ENCODE measurements at regions of chr12 and their contacts with region 1.

Region 1: GRCh38 chr12:26264215-26264838 is 69.0 kb downstream of the SSPN start:
- DNase-seq: peak; percentile 31
- H3K4me3 Mint-ChIP-seq: no peak overlapping the region
- H3K27ac Mint-ChIP-seq: no peak overlapping the region
- H3K4me1 Mint-ChIP-seq: no peaks in the 10 kb centered on the region
- H3K27me3 Mint-ChIP-seq: no peaks in the 10 kb centered on the region
- CTCF ChIP-seq: no peak

Region 2: DNA sequence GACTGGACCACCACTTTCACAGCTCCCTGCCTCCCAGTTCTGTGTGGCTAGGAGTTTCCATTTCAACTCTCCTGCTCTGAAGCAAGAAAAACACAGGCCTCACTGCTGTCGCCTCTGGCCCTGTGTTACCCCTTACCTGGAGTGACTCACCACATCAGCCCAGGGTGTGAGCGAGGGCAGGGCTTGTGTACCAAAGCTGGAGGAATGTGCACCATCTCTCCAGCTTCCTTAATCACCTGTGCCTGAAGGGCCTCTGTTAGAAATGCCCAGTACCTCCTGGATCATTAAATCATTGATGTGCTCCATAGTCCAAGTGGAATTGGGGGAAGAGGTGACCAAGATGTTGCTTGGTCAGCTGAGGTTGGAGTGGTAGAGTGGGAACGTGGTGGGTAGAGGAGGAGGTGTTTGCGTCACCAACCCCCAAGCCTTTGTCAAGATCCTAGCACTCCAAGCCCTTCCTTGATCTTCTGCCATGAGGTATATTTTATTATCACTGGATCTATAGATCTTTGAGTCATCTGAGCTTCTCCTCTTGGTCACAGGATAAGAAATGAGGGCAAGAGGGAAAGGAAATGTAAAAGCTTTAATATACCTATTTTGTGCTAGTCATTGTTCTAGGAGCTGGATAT is 17.7 kb before region 1 on chr12:
- CTCF ChIA-PET with region 1: interaction called, 3 read pairs
- POLR2A ChIA-PET with region 1: interaction called, 16 read pairs
- intact Hi-C with region 1: no loop called
- DNase-seq: peak; percentile 82
- H3K4me3 Mint-ChIP-seq: no peak overlapping the region
- H3K27ac Mint-ChIP-seq: peak overlapping the region; percentile 32
- H3K4me1 Mint-ChIP-seq: peaks cover 9% of the 10 kb centered on the region
- H3K27me3 Mint-ChIP-seq: no peaks in the 10 kb centered on the region
- CTCF ChIP-seq: no peak

Region 3: DNA sequence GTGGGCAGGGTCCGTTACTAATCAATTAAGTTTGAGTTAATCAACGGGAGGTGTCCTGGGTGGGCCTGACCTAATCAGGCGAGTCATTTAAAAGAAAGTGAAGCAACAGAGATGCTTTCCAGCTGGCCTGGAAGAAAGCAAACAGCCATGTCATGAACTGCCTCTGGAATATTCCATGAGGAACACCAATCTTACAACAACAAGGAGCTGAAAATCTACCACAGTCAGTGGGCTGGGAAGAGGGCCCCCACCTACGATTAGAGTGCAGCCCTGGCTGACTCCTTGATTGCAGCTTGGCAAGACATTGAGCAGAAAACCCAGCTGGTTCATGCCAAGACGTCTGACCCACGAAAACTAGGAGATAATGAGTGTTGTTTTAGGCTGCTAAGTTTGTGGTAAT is 12.7 kb before region 1 on chr12:
- CTCF ChIA-PET with region 1: interaction called, 9 read pairs
- POLR2A ChIA-PET with region 1: interaction called, 16 read pairs
- intact Hi-C with region 1: no loop called
- DNase-seq: no peak
- H3K4me3 Mint-ChIP-seq: no peak overlapping the region
- H3K27ac Mint-ChIP-seq: no peak overlapping the region
- H3K4me1 Mint-ChIP-seq: peaks cover 5% of the 10 kb centered on the region
- H3K27me3 Mint-ChIP-seq: no peaks in the 10 kb centered on the region
- CTCF ChIP-seq: no peak

Region 4: GRCh38 chr12:26274441-26275312 is 10.3 kb after region 1 on chr12:
- CTCF ChIA-PET with region 1: interaction called, 10 read pairs
- POLR2A ChIA-PET with region 1: interaction called, 20 read pairs
- intact Hi-C with region 1: no loop called
- DNase-seq: peak; percentile 99
- H3K4me3 Mint-ChIP-seq: no peak overlapping the region
- H3K27ac Mint-ChIP-seq: peak overlapping the region; percentile 64
- H3K4me1 Mint-ChIP-seq: peaks cover 37% of the 10 kb centered on the region
- H3K27me3 Mint-ChIP-seq: no peaks in the 10 kb centered on the region
- CTCF ChIP-seq: no peak

Region 5: GRCh38 chr12:26298785-26299621 is 34.7 kb after region 1 on chr12:
- CTCF ChIA-PET with region 1: interaction called, 12 read pairs
- POLR2A ChIA-PET with region 1: interaction called, 4 read pairs
- intact Hi-C with region 1: no loop called
- DNase-seq: peak; percentile 82
- H3K4me3 Mint-ChIP-seq: peak overlapping the region; percentile 61
- H3K27ac Mint-ChIP-seq: peak overlapping the region; percentile 76
- H3K4me1 Mint-ChIP-seq: peaks cover 8% of the 10 kb centered on the region
- H3K27me3 Mint-ChIP-seq: no peaks in the 10 kb centered on the region
- CTCF ChIP-seq: peak; percentile 36

Region 6: GRCh38 chr12:26402648-26403047 is 138.3 kb after region 1 on chr12:
- CTCF ChIA-PET with region 1: interaction called, 14 read pairs
- POLR2A ChIA-PET with region 1: interaction called, 3 read pairs
- intact Hi-C with region 1: no loop called
- DNase-seq: peak; percentile 78
- H3K4me3 Mint-ChIP-seq: no peak overlapping the region
- H3K27ac Mint-ChIP-seq: no peak overlapping the region
- H3K4me1 Mint-ChIP-seq: no peaks in the 10 kb centered on the region
- H3K27me3 Mint-ChIP-seq: no peaks in the 10 kb centered on the region
- CTCF ChIP-seq: peak; percentile 42

Region 7: DNA sequence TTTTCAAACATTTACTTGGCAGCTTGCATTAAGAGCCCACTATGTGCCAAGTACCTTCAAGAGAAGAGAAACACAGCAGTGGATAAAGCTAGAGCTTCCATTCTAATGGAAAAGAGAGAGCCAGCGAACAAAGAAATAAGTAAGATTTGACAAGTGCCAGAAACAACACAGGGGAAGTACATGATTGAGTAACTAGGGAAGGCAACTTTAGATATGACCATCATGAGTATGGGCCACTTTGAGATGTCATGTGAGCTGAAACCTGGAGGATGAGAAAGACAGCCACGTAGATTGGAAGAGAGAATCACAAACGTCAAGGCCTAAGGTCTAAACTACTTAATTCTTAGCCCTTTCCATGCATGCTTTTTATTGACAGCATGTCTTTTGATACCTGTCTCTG is 447.2 kb after region 1 on chr12:
- CTCF ChIA-PET with region 1: no interaction called
- POLR2A ChIA-PET with region 1: no interaction called
- intact Hi-C with region 1: no loop called
- DNase-seq: no peak
- H3K4me3 Mint-ChIP-seq: no peak overlapping the region
- H3K27ac Mint-ChIP-seq: no peak overlapping the region
- H3K4me1 Mint-ChIP-seq: peaks cover 5% of the 10 kb centered on the region
- H3K27me3 Mint-ChIP-seq: no peaks in the 10 kb centered on the region
- CTCF ChIP-seq: no peak

Measured in MCF 10A (cell line).